ENCODE measurements at regions of chr12 and their contacts with region 1.

Region 1: DNA sequence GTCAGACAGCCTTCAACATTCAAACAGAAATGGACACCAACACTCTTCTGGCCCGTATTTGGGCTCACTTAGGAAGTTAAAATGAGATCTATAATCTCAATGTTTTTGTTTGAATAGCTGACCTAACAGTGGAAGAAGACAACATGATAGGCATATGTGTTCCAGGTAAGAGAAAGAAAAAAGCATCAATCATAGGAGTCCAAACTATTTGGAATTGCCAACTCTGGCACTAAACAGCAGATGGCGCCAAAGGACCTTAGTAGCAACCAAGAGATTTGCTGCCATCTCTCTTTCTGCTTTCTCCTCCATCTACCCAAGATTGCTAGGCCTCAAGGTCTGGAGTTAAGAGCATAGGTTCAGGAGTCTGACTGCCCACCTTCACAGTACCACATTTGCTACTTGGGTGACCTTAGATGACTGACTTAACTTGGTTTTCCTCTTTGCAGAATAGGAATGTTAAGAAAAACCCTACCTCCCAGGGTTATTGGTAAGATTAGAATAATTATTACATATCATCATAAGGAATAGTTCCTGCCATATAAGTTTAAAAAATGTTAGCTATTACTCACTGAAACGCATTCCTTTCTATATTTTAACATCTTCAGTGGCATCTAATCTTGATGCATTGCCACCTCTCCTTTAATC is 30.2 kb downstream of the PEX5 start:
- DNase-seq: peak; percentile 81 to 86 (median 83)
- ATAC-seq: peak; percentile 63
- H3K4me3 ChIP-seq: no peak overlapping the region
- H3K27ac ChIP-seq: no peak overlapping the region
- H3K4me1 ChIP-seq: no peaks in the 10 kb centered on the region
- H3K27me3 ChIP-seq: no peaks in the 10 kb centered on the region
- CTCF ChIP-seq: peak; percentile 68 to 88 (median 84)
- POLR2A ChIP-seq: no peak

Region 2: DNA sequence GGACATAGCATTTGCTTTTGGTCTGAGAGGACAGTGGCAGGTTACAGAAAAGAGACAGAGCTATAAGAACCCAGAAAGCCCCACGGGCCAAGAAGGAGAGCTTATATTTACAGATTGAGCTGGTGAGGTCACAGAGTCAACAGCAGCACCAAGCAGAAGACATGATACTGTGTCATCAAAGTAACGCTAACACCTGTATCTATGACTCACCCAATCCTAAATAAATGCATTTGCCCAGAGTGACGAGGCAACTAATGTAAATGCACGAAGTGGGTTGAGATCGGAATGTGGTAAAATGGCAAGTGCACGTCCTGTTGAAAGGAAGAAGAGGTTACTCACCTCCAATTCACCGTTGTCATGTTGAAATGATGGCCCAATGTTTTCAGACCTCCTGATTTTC is 230.9 kb after region 1 on chr12:
- intact Hi-C with region 1: loop called (anchors 10 kb)
- DNase-seq: no peak
- ATAC-seq: no peak
- H3K4me3 ChIP-seq: no peak overlapping the region
- H3K27ac ChIP-seq: no peak overlapping the region
- H3K4me1 ChIP-seq: no peaks in the 10 kb centered on the region
- H3K27me3 ChIP-seq: no peaks in the 10 kb centered on the region
- CTCF ChIP-seq: no peak
- POLR2A ChIP-seq: no peak

Region 3: GRCh38 chr12:7542813-7543498 is 323.2 kb after region 1 on chr12:
- intact Hi-C with region 1: no loop called
- DNase-seq: peak in 1 of 4 donors; percentile 10
- ATAC-seq: peak; percentile 30
- H3K4me3 ChIP-seq: no peak overlapping the region
- H3K27ac ChIP-seq: peak overlapping the region in 1 of 4 donors; percentile 58
- H3K4me1 ChIP-seq: no peaks in the 10 kb centered on the region
- H3K27me3 ChIP-seq: no peaks in the 10 kb centered on the region
- CTCF ChIP-seq: no peak
- POLR2A ChIP-seq: peak in 1 of 3 donors; percentile 16

Region 4: GRCh38 chr12:7638760-7639555 is 419.2 kb after region 1 on chr12:
- intact Hi-C with region 1: loop called (anchors 5 kb)
- DNase-seq: peak; percentile 80 to 91 (median 86)
- ATAC-seq: peak; percentile 92
- H3K4me3 ChIP-seq: no peak overlapping the region
- H3K27ac ChIP-seq: peak overlapping the region in 3 of 4 donors; percentile 18 to 73 (median 47)
- H3K4me1 ChIP-seq: peaks cover 8% of the 10 kb centered on the region
- H3K27me3 ChIP-seq: no peaks in the 10 kb centered on the region
- CTCF ChIP-seq: peak; percentile 81 to 97 (median 93)
- POLR2A ChIP-seq: peak in 1 of 3 donors; percentile 26

Measured in body of pancreas (tissue), 4 donors.